Calu3 (cell line): ENCODE measurements at regions of chr20 and their contacts with region 1.

Region 1: GRCh38 chr20:35092524-35093266 is at the start of gene TRPC4AP:
- DNase-seq: peak; percentile 95
- H3K4me3 Mint-ChIP-seq: peak within 1 kb of the TSS; percentile 75
- H3K27ac Mint-ChIP-seq: peak within 1 kb of the TSS; percentile 93
- H3K4me1 Mint-ChIP-seq: peaks cover 31% of the 10 kb centered on the region
- H3K27me3 Mint-ChIP-seq: no peaks in the 10 kb centered on the region
- CTCF ChIP-seq: peak; percentile 98
- total RNA-seq, gene TRPC4AP: 79.0 and 85.3 TPM in 2 replicates

Region 2: DNA sequence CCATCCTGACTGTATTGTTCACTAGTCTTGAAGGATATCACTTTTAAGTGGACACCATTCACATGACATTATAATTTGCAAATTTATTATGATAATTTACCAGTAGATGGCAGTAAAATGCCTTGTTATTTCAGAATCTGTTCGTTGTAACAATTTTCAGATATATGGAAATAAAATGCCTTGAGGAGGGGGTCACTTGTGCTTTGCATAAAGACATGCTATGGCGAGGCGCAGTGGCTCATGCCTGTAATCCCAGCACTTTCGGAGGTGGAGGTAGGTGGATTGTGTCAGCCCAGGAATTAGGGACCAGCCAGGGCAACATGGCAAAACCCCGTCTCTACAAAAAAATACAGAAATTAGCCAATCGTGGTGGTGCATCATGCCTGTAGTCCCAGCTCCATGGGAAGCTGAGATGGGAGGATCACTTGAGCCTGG is 258.2 kb before region 1 on chr20:
- CTCF ChIA-PET with region 1: no interaction called
- intact Hi-C with region 1: loop called (anchors 1 kb)
- DNase-seq: no peak
- H3K4me3 Mint-ChIP-seq: peak overlapping the region; percentile 47
- H3K27ac Mint-ChIP-seq: no peak overlapping the region
- H3K4me1 Mint-ChIP-seq: no peaks in the 10 kb centered on the region
- H3K27me3 Mint-ChIP-seq: peaks cover 44% of the 10 kb centered on the region
- CTCF ChIP-seq: peak; percentile 15

Region 3: GRCh38 chr20:34876162-34877001 is 216.3 kb before region 1 on chr20 and contains the start of gene ACSS2:
- CTCF ChIA-PET with region 1: interaction called, 5 read pairs
- intact Hi-C with region 1: loop called (anchors 10 kb)
- DNase-seq: peak; percentile 100
- H3K4me3 Mint-ChIP-seq: peak within 1 kb of the TSS; percentile 85
- H3K27ac Mint-ChIP-seq: peak within 1 kb of the TSS; percentile 93
- H3K4me1 Mint-ChIP-seq: peaks cover 52% of the 10 kb centered on the region
- H3K27me3 Mint-ChIP-seq: peaks cover 31% of the 10 kb centered on the region
- CTCF ChIP-seq: no peak
- total RNA-seq, gene ACSS2: 34.9 and 35.3 TPM in 2 replicates

Region 4: DNA sequence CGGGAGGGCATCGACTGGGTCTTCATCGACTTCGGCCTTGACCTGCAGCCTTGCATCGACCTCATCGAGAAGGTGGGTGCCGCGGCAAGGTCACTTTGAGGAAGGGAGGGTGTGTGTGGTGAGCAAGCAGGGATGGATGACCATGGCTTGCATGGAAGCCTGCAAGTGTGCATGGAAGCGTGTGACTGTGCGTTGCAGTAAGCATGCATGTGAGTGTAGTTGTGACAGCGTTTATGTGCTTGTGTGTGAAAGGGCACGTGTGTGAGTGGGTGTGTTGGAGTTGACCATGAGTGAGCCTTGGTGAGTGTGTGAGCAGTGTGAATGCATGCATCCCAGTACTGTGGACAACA is 104.5 kb before region 1 on chr20:
- CTCF ChIA-PET with region 1: no interaction called
- intact Hi-C with region 1: no loop called
- DNase-seq: no peak
- H3K4me3 Mint-ChIP-seq: no peak overlapping the region
- H3K27ac Mint-ChIP-seq: peak overlapping the region; percentile 7
- H3K4me1 Mint-ChIP-seq: peaks cover 18% of the 10 kb centered on the region
- H3K27me3 Mint-ChIP-seq: peaks cover 35% of the 10 kb centered on the region
- CTCF ChIP-seq: no peak

Region 5: DNA sequence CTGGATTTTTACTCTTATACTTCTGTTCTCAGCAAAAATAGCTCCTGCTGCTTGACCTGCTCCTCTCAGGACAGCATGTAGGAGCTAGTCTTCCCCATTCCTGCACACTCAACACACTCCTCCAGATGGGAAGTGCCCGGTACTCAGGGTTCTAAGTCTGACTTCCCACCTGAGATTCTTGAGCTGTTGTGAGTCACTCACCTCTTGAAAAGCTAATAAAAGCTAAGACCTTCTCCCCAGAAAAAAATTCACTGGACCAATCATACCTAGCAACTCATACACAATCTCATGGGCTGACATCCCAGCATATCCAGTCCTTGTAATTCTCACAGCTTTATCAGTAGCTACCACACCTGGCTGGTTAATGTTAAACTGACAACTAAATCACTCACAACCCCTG is 53.5 kb before region 1 on chr20:
- CTCF ChIA-PET with region 1: interaction called, 16 read pairs
- intact Hi-C with region 1: no loop called
- DNase-seq: peak; percentile 63
- H3K4me3 Mint-ChIP-seq: peak overlapping the region; percentile 48
- H3K27ac Mint-ChIP-seq: peak overlapping the region; percentile 59
- H3K4me1 Mint-ChIP-seq: peaks cover 25% of the 10 kb centered on the region
- H3K27me3 Mint-ChIP-seq: no peaks in the 10 kb centered on the region
- CTCF ChIP-seq: no peak

Region 6: DNA sequence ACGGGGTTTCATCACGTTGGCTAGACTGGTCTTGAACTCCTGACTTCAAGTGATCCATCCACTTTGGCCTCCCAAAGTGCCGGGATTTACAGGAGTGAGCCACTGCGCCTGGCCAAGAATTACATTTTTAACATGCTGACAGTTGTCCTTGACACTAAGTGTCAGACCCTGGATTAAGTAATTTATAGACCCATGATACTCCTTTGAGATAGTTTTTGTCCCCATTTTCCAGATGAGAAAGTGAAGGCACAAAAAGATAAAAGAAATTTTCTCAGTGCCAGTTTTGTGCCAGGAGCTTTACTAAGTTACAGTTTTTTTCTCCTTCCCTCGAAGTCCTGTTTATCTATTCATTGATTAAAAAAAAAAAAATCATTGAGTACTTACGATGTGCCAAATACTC is 64.3 kb after region 1 on chr20:
- CTCF ChIA-PET with region 1: no interaction called
- intact Hi-C with region 1: no loop called
- DNase-seq: no peak
- H3K4me3 Mint-ChIP-seq: no peak overlapping the region
- H3K27ac Mint-ChIP-seq: no peak overlapping the region
- H3K4me1 Mint-ChIP-seq: no peaks in the 10 kb centered on the region
- H3K27me3 Mint-ChIP-seq: no peaks in the 10 kb centered on the region
- CTCF ChIP-seq: no peak

Region 7: GRCh38 chr20:35207950-35208611 is 115.4 kb after region 1 on chr20:
- CTCF ChIA-PET with region 1: interaction called, 18 read pairs
- intact Hi-C with region 1: loop called (anchors 1 kb)
- DNase-seq: peak; percentile 93
- H3K4me3 Mint-ChIP-seq: no peak overlapping the region
- H3K27ac Mint-ChIP-seq: no peak overlapping the region
- H3K4me1 Mint-ChIP-seq: peaks cover 8% of the 10 kb centered on the region
- H3K27me3 Mint-ChIP-seq: no peaks in the 10 kb centered on the region
- CTCF ChIP-seq: peak; percentile 77

Region 8: DNA sequence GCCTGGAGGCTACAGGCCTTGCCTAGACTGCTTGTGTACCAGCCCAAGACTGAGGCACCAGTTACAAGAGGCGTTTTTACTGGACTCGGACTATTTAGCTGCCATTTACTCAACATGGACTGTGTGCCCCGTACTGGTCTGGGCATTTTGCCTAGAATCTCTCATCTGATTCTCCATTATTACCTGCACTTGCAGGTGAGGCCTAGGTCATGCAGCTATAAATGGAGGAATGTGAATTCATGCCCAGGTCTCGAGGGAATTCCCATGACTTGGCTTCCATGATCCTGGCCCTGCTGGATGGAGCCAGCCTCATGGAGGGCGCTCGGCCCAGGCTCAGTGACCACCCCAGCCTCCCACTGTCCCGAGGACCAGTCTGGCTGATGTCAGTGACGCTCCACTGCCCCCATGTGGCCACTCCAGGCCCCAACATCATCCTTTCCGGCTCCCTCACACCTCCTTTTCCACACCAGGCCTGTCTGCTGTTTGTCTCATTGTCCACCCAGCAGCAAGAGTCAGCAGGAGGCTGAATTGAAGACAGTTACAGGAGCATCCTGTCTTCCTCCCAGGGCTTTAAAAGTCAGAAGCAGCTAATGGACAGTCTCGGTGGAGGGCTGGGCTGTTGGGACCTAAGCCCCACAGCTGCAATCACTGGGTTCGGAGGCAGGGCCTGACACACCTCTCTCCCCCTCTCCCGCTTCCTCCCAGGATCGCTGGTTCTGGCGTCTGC is 176.5 kb after region 1 on chr20:
- CTCF ChIA-PET with region 1: interaction called, 23 read pairs
- intact Hi-C with region 1: loop called (anchors 5 kb)
- DNase-seq: peak; percentile 90
- H3K4me3 Mint-ChIP-seq: no peak overlapping the region
- H3K27ac Mint-ChIP-seq: peak overlapping the region; percentile 19
- H3K4me1 Mint-ChIP-seq: peaks cover 25% of the 10 kb centered on the region
- H3K27me3 Mint-ChIP-seq: no peaks in the 10 kb centered on the region
- CTCF ChIP-seq: peak; percentile 90

Region 9: DNA sequence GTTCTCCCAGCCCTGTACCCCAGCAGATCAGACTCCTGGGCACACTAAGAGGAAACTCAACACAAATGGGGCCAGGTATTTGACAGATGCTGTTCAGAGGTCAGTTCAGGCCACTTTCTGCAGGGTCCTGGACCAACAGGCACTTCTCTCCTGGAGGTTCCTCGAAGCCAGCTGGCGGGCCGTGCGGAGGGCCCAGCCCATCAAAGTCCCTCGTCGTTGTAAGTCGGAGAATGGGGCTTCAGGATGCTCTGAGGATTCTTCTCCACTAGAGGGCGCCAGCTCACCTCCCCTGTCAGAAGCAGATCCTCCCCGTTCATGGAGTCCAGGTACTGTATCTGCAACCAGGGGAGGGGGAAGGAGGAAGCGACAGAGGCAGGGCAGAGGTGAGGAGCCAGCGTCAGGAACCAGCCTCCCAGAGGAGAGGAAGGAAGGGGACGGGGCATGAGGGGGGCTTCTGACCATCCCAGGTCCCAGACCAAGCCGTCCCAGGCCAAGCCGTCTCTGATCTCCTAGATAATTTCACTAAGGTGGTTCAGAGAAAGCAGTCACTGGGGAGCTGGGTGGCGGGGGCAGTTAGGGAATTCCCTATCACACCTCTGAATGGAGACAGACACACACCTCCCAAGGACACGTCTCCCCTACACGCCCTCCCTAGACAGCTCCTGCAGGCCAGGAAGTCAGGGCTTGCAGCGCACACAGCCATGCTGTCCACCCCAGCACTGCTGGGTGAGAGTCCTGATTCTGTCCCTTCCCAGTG is 211.2 kb after region 1 on chr20:
- CTCF ChIA-PET with region 1: interaction called, 21 read pairs
- intact Hi-C with region 1: no loop called
- DNase-seq: peak; percentile 95
- H3K4me3 Mint-ChIP-seq: peak overlapping the region; percentile 2
- H3K27ac Mint-ChIP-seq: peak overlapping the region; percentile 88
- H3K4me1 Mint-ChIP-seq: peaks cover 84% of the 10 kb centered on the region
- H3K27me3 Mint-ChIP-seq: no peaks in the 10 kb centered on the region
- CTCF ChIP-seq: peak; percentile 97

Region 10: GRCh38 chr20:35551503-35551902 is 458.8 kb after region 1 on chr20:
- CTCF ChIA-PET with region 1: no interaction called
- intact Hi-C with region 1: no loop called
- DNase-seq: no peak
- H3K4me3 Mint-ChIP-seq: no peak overlapping the region
- H3K27ac Mint-ChIP-seq: no peak overlapping the region
- H3K4me1 Mint-ChIP-seq: no peaks in the 10 kb centered on the region
- H3K27me3 Mint-ChIP-seq: no peaks in the 10 kb centered on the region
- CTCF ChIP-seq: no peak